ENCODE measurements at regions of chr17 and their contacts with region 1.

Region 1: GRCh38 chr17:20121359-20122253 is 112.4 kb downstream of the SPECC1 start:
- DNase-seq: peak; percentile 50
- ATAC-seq: peak; percentile 86
- H3K4me3 ChIP-seq: no peak overlapping the region
- H3K27ac ChIP-seq: no peak overlapping the region
- H3K4me1 ChIP-seq: no peaks in the 10 kb centered on the region
- H3K27me3 ChIP-seq: no peaks in the 10 kb centered on the region; a peak in 1 of 5 replicates
- CTCF ChIP-seq: peak; percentile 83
- EP300 ChIP-seq: no peak
- POLR2A ChIP-seq: no peak
- RAD21 ChIP-seq: peak; percentile 55; the same call in 1 of the 2 replicates

Region 2: GRCh38 chr17:20226814-20227482 is 105.3 kb after region 1 on chr17:
- CTCF ChIA-PET with region 1: interaction called, 12 read pairs
- POLR2A ChIA-PET with region 1: no interaction called
- in situ Hi-C with region 1: loop called (anchors 10 kb)
- intact Hi-C with region 1: loop called (anchors 2 kb)
- DNase-seq: peak; percentile 50
- ATAC-seq: peak; percentile 100
- H3K4me3 ChIP-seq: no peak overlapping the region
- H3K27ac ChIP-seq: no peak overlapping the region
- H3K4me1 ChIP-seq: no peaks in the 10 kb centered on the region
- H3K27me3 ChIP-seq: no peaks in the 10 kb centered on the region
- CTCF ChIP-seq: peak; percentile 94
- EP300 ChIP-seq: no peak
- POLR2A ChIP-seq: no peak
- RAD21 ChIP-seq: peak; percentile 86

Measured in HepG2 (cell line).